Right ventricle myocardium superior (tissue), 1 donor: ENCODE measurements at regions of chr20 and their contacts with region 1.

Region 1: GRCh38 chr20:24157213-24157612 is 168.6 kb upstream of the GGTLC1 start:
- DNase-seq: no peak
- ATAC-seq: no peak

Region 2: DNA sequence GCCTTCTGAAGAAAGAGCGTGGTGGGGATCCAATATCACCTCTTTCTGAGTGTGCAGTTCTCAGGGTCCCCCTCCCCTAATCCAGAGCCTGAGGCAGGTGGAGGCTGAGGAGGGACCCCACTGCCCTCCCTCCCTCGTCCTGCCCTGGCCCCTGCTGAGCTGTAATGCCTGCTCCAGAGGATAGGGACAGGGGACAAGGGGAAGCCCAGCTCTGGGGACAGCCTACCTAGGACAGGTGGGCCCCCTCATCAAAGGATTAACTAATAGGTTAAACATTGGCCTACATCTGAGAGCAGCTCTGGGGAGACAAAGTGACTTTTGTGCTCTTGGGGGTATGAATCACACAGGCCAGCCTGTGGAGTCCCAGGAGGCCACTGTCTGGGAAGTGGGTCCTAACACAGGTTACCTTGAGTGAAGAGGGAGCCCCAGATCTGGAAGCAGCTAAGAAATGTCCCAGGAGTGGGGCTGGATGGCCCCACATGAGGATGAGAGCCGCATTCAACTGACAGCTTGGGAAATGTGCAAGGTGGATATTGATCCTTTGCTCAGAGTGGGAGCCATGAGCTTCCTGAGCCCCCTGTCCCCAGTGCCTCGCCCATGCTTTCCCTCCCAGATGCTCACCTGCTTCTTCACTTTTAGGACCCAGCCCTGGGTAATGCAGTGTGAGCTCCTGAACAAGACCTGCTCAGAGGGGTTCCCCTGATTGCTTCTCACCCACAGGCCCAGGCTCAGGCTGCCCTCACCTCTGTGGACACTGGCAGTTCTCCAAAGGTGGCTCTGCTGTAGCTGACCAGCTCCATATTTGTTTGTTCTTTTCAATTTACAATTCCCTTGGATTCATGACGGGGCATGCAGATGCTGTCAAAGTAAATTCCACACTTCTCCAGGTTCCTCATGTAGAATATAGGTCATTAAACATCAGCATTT is 571.1 kb before region 1 on chr20:
- intact Hi-C with region 1: no loop called
- DNase-seq: no peak
- ATAC-seq: no peak

Region 3: DNA sequence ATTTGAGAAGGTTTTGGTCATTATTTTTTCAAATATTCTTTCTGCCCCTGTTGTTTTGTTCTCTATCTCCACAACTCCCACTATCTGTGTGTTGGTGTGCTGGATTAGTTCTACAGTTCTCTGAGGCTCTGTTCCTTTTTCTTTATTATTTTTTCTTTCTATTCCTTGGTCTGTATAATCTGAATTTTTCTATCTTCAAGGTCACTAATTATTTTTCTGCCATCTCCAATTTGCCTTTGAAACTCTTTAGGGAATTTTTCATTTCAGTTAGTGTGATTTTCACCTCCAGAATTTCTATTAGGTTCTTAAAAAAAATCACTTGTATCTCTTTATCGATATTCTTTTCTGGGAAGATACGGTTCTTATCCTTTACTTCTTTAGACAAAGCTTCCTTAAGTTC is 86.5 kb before region 1 on chr20:
- intact Hi-C with region 1: no loop called
- DNase-seq: no peak
- ATAC-seq: no peak

Region 4: DNA sequence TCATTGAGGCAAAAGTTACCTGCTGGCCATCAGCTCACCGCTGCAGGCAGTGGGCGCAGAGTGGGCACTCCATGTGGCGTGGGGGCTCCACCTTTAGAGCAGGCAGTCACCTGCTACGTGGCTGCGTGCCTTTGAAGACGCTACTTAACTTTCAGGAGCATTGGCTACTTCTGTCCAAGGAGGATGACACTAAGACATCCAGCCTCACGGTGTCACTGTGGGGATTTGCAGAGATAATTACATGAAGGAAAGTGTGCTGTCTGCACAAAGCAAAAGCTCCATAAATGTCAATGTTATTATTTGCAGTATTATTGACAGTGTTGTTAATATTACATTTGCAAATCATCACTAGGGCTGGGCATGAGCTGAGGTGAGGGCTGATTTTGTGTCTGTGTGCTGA is 146.2 kb after region 1 on chr20:
- intact Hi-C with region 1: no loop called
- DNase-seq: no peak
- ATAC-seq: no peak

Region 5: GRCh38 chr20:24917797-24918578 is 760.8 kb after region 1 on chr20:
- intact Hi-C with region 1: loop called (anchors 5 kb)
- DNase-seq: peak; percentile 81
- ATAC-seq: peak; percentile 90